ENCODE measurements at regions of chr9 and their contacts with region 1.

Region 1: DNA sequence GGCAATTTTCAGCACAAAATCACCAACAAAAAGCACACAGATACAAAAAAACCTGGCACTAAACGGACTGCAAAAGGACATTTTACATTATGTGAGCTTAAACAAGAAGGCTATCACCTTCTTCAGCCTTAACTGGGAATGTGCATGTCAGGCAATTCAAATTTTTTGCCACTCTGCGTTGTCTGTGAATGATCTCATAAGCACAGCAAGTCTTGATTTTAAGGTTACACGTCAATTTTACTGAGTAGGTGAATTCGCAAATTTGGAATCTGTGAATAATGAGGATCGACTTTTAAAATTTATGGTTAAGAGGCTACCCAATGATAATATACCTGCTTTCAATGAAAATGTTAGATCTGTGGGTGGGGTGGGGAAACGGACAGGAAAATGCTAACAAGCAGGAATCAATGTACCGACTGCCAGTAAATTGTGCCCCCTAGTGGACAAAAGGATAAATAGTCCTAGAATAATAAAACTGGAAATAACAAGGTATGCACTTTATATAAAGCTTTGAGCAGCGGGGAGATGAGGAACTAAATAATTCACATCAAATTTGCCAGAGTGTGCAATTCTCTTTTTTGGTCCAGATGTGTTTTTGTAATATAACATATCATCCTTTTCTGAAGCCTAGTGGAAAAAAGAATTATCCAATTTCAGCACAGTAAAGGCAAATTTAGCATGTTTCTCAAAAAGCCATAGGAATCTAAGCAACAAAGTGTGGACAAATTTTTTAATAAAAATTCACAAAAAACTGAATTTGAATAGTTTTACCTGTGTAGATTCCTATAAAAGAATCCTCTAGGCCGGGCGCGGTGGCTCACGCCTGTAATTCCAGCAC is 20.5 kb downstream of the EQTN start:
- H3K4me3 ChIP-seq: no peak overlapping the region
- H3K27ac ChIP-seq: no peak overlapping the region
- H3K4me1 ChIP-seq: no peaks in the 10 kb centered on the region
- CTCF ChIP-seq: no peak; the same call in 1 of the 2 replicates

Region 2: GRCh38 chr9:27033823-27034403 is 242.5 kb before region 1 on chr9:
- CTCF ChIA-PET with region 1: interaction called, 39 read pairs
- POLR2A ChIA-PET with region 1: no interaction called
- H3K4me3 ChIP-seq: no peak overlapping the region
- H3K27ac ChIP-seq: no peak overlapping the region
- H3K4me1 ChIP-seq: no peaks in the 10 kb centered on the region
- CTCF ChIP-seq: no peak

Region 3: GRCh38 chr9:27247756-27248155 is 28.7 kb before region 1 on chr9:
- CTCF ChIA-PET with region 1: interaction called, 22 read pairs
- POLR2A ChIA-PET with region 1: no interaction called
- H3K4me3 ChIP-seq: no peak overlapping the region
- H3K27ac ChIP-seq: no peak overlapping the region
- H3K4me1 ChIP-seq: no peaks in the 10 kb centered on the region
- CTCF ChIP-seq: 0 out of 2 replicates have a peak, but pooled peaks have one; percentile 21